Right ventricle myocardium inferior (tissue), 1 donor: ENCODE measurements at regions of chr7 and their contacts with region 1.

Region 1: GRCh38 chr7:135645296-135645904 is 16.9 kb upstream of the STMP1 start:
- DNase-seq: no peak
- ATAC-seq: no peak

Region 2: GRCh38 chr7:135274495-135275268 is 370.7 kb before region 1 on chr7:
- intact Hi-C with region 1: loop called (anchors 2 kb)
- DNase-seq: no peak
- ATAC-seq: peak; percentile 59

Region 3: GRCh38 chr7:135620980-135621850 is 24.2 kb before region 1 on chr7:
- intact Hi-C with region 1: no loop called
- DNase-seq: no peak
- ATAC-seq: no peak